Stomach (tissue), 19 donors: ENCODE measurements at regions of chr2 and their contacts with region 1.

Region 1: GRCh38 chr2:74876081-74876886 is 42.4 kb downstream of the HK2 start:
- DNase-seq: peak in 1 of 2 donors; percentile 77
- H3K4me3 ChIP-seq: no peak overlapping the region
- H3K27ac ChIP-seq: peak overlapping the region in 3 of 5 donors; percentile 30 to 47 (median 44)
- H3K4me1 ChIP-seq: peaks cover 0 to 16% (median 10%) of the 10 kb centered on the region in 4 donors
- H3K27me3 ChIP-seq: no peaks in the 10 kb centered on the region
- CTCF ChIP-seq: peak in 5 of 7 experiments; percentile 45 to 82 (median 75)
- EP300 ChIP-seq: no peak
- POLR2A ChIP-seq: no peak

Region 2: GRCh38 chr2:74714696-74715077 is 161.6 kb before region 1 on chr2:
- intact Hi-C with region 1: loop called (anchors 5 kb)
- DNase-seq: no peak
- H3K4me3 ChIP-seq: peak overlapping the region in 1 of 4 donors; percentile 56
- H3K27ac ChIP-seq: peak overlapping the region in 1 of 5 donors; percentile 74
- H3K4me1 ChIP-seq: peaks cover 3 to 16% (median 10%) of the 10 kb centered on the region in 4 donors
- H3K27me3 ChIP-seq: peaks cover 0 to 20% (median 0%) of the 10 kb centered on the region in 3 donors
- CTCF ChIP-seq: no peak
- EP300 ChIP-seq: no peak
- POLR2A ChIP-seq: no peak

Region 3: DNA sequence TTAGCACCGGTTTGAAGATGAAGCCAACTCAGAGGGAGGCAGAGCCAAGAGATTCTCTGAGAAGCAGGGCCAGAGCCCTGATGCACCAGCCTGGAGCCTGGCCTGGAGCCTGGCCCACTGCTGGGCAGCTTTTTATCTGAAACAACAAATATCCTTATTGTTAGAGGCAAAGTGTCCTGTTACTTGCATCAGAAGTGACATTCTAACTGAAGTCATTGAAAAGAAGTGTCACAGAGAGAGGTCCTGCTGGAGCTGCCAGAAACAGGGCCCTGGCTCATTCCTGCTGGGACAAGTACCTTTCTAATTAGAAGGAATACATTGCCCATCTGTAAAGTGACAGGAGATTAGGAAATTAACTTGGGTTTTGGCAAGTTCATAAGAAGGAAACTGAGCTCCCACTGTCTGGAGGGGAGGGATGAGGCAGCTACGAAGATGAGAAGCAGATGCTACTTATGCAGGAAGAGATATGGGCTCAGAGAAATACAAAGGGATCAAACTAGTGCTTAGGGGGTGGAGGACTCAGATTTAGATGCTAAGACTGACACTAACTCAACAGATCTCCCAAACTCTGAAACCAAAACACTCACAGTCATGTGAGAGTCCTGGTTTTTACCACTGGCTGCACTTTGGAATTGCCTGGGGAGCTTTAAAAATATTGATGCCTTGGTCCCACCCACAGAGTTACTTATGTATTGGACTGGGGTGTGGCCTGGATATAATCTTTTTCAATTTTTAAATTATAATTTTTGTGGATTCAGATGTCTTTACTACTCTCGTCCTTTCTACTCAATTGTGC is 53.3 kb before region 1 on chr2:
- intact Hi-C with region 1: loop called (anchors 10 kb)
- DNase-seq: no peak
- H3K4me3 ChIP-seq: no peak overlapping the region
- H3K27ac ChIP-seq: no peak overlapping the region
- H3K4me1 ChIP-seq: no peaks in the 10 kb centered on the region
- H3K27me3 ChIP-seq: no peaks in the 10 kb centered on the region
- CTCF ChIP-seq: no peak
- EP300 ChIP-seq: no peak
- POLR2A ChIP-seq: no peak

Region 4: DNA sequence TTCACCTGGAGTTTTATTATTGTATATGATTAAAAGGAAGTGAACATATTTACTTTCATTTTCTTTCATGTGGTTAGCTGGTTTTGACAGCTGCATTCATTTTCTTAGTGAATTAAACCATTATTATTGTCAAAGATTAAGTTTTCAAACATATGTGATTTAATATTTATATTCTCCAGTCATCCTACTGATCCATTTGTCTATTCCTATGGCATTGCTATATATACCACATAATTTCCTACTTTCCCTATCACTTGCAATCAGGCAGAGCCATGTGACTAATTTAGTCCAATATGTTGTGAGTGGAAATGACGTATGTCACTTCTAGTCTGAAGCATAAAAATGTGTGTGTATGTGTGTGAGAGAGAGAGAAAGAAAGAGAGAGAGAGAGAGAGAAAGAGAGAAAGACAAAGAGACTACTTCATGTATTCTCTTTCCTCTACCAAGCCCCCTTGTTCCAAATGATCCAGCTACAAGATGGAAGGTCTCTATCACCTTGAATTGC is 335.0 kb after region 1 on chr2:
- intact Hi-C with region 1: no loop called
- DNase-seq: no peak
- H3K4me3 ChIP-seq: no peak overlapping the region
- H3K27ac ChIP-seq: no peak overlapping the region
- H3K4me1 ChIP-seq: no peaks in the 10 kb centered on the region
- H3K27me3 ChIP-seq: no peaks in the 10 kb centered on the region
- CTCF ChIP-seq: no peak
- EP300 ChIP-seq: no peak
- POLR2A ChIP-seq: no peak